Adrenal gland (tissue), 19 donors: ENCODE measurements at regions of chr15 and their contacts with region 1.

Region 1: DNA sequence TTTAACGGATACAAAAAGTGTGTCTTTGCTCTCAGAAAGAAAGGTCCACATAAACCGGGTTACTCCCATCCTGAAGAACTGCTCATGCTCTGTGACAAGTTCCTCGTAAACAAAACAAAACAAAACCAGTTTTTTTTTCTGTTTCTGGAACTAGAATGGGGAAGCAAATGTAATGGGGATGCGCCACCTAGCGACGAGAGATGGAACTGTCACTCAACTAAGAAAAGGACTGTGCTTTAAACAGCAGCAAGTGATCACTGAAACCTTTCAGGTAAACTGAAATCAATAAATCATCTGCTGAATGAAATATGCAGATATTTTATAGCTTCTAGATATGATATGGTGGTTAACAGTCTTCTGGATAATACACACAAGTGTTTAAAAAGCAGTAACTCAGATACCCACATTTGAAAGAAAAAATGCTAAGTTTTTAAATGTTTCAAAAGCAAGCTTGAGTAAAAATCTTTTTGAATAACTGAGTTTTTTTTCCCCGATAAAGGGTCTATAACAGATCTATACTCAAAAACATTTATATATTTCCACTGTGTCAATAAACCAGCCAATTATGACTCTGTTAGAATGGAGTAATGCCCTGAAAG is 10.9 kb downstream of the TM2D3 start:
- DNase-seq: peak; percentile 63 to 95 (median 86)
- H3K4me3 ChIP-seq: peak overlapping the region in 1 of 4 donors; percentile 19
- H3K27ac ChIP-seq: peak overlapping the region in 3 of 5 donors; percentile 24 to 62 (median 56)
- H3K4me1 ChIP-seq: peaks cover 6 to 16% of the 10 kb centered on the region in 2 donors
- H3K27me3 ChIP-seq: no peaks in the 10 kb centered on the region
- CTCF ChIP-seq: peak; percentile 89 to 98 (median 96)
- POLR2A ChIP-seq: no peak

Region 2: DNA sequence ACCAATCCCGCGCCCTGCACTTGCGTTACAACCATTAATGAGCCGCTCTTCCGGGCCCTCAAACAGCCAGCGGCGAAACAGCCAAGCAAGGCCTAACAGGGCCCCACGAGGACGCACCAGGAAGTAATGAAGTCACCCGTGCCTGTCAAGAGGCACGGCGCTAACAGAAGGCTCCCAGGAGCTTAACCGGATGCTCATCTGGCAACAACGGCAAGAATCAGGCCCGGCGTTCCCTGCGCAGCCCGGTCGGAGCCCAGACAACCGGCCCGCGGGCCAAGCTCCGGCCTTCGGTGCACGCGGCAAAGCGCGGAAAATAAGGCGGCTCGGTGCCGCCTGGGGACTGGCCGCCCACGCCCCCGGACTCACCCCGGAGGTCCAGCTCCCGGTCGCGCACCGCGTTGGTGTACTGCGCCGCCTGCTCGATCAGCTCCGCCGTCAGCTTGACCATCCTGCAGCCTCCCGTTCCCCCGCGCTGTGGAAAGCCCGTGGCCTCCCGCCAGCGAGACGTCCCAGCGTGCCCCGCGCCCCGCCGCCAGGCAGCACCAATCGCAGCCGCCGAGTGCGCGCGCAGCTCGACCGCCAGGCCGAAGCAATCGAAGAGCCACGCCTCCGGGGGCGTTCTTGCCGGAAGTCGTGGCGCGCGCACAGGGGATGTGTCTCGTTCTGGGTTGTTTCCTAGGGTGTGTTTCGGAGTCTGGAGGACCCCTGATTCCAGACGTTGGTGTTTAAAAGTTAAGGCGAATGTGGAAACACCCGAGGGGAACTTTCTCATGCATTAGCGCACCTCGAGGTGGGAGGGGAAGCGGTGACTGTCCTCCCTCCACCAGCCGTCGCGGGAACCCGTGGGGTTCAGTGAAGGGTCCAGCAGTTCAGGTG is 346.3 kb before region 1 on chr15 and contains the start of gene SNRPA1:
- intact Hi-C with region 1: loop called (anchors 5 kb)
- DNase-seq: peak; percentile 97 to 99 (median 98)
- H3K4me3 ChIP-seq: peak within 1 kb of the TSS; percentile 57 to 86 (median 70)
- H3K27ac ChIP-seq: peak within 1 kb of the TSS; percentile 75 to 96 (median 92)
- H3K4me1 ChIP-seq: peaks cover 19 to 28% of the 10 kb centered on the region in 2 donors
- H3K27me3 ChIP-seq: no peaks in the 10 kb centered on the region
- CTCF ChIP-seq: no peak
- POLR2A ChIP-seq: peak; percentile 76 to 81
- total RNA-seq, gene SNRPA1: 16.0 to 58.6 (median 27.6) TPM

Region 3: GRCh38 chr15:101426881-101427280 is 214.4 kb before region 1 on chr15:
- intact Hi-C with region 1: no loop called
- DNase-seq: no peak
- H3K4me3 ChIP-seq: no peak overlapping the region
- H3K27ac ChIP-seq: no peak overlapping the region
- H3K4me1 ChIP-seq: no peaks in the 10 kb centered on the region
- H3K27me3 ChIP-seq: no peaks in the 10 kb centered on the region
- CTCF ChIP-seq: no peak
- POLR2A ChIP-seq: no peak

Region 4: GRCh38 chr15:101501703-101502373 is 139.4 kb before region 1 on chr15:
- intact Hi-C with region 1: loop called in 1 of 2 experiments (anchors 10 kb)
- DNase-seq: peak; percentile 31 to 66 (median 54)
- H3K4me3 ChIP-seq: no peak overlapping the region
- H3K27ac ChIP-seq: no peak overlapping the region
- H3K4me1 ChIP-seq: peaks cover 7 to 12% of the 10 kb centered on the region in 2 donors
- H3K27me3 ChIP-seq: peaks cover 21% of the 10 kb centered on the region
- CTCF ChIP-seq: peak; percentile 47 to 62 (median 54)
- POLR2A ChIP-seq: no peak